ENCODE measurements at regions of chr15 and their contacts with region 1.

Region 1: GRCh38 chr15:88657326-88658069 is 18.7 kb downstream of the ISG20 start:
- DNase-seq: peak in 1 of 2 experiments; percentile 63
- H3K4me3 ChIP-seq: no peak overlapping the region
- H3K4me3 Mint-ChIP-seq: no peak overlapping the region
- H3K27ac Mint-ChIP-seq: no peak overlapping the region
- H3K4me1 ChIP-seq: no peaks in the 10 kb centered on the region
- H3K4me1 Mint-ChIP-seq: no peaks in the 10 kb centered on the region
- H3K27me3 ChIP-seq: no peaks in the 10 kb centered on the region
- H3K27me3 Mint-ChIP-seq: peaks cover 7% of the 10 kb centered on the region
- CTCF ChIP-seq: peak; percentile 81 to 84

Region 2: GRCh38 chr15:88498996-88499395 is 158.5 kb before region 1 on chr15:
- CTCF ChIA-PET with region 1: no interaction called
- POLR2A ChIA-PET with region 1: no interaction called
- intact Hi-C with region 1: no loop called
- DNase-seq: no peak
- H3K4me3 ChIP-seq: no peak overlapping the region
- H3K4me3 Mint-ChIP-seq: no peak overlapping the region
- H3K27ac Mint-ChIP-seq: no peak overlapping the region
- H3K4me1 ChIP-seq: no peaks in the 10 kb centered on the region
- H3K4me1 Mint-ChIP-seq: no peaks in the 10 kb centered on the region
- H3K27me3 ChIP-seq: no peaks in the 10 kb centered on the region
- H3K27me3 Mint-ChIP-seq: no peaks in the 10 kb centered on the region
- CTCF ChIP-seq: no peak

Region 3: DNA sequence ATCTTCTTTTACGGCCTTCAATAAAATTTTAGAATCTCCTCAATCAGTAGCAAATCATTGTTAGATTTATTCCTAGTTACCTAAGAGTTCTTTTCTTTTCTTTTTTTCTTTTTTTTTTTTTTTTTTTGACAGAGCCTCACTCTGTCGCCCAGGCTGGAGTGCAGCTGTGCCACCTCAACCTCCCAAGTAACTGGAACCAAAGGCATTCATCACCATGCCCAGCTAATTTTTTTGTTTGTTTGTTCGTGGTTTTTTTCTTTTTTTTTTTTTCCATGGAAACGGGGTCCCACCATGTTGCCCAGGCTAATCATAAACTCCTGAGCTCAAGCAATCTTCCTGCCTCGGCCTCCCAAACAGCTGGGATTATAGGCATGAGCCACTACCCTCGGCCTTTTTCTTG is 66.7 kb before region 1 on chr15:
- CTCF ChIA-PET with region 1: no interaction called
- POLR2A ChIA-PET with region 1: no interaction called
- intact Hi-C with region 1: loop called (anchors 10 kb)
- DNase-seq: no peak
- H3K4me3 ChIP-seq: no peak overlapping the region
- H3K4me3 Mint-ChIP-seq: no peak overlapping the region
- H3K27ac Mint-ChIP-seq: no peak overlapping the region
- H3K4me1 ChIP-seq: no peaks in the 10 kb centered on the region
- H3K4me1 Mint-ChIP-seq: no peaks in the 10 kb centered on the region
- H3K27me3 ChIP-seq: no peaks in the 10 kb centered on the region
- H3K27me3 Mint-ChIP-seq: peaks cover 6% of the 10 kb centered on the region
- CTCF ChIP-seq: no peak

Region 4: DNA sequence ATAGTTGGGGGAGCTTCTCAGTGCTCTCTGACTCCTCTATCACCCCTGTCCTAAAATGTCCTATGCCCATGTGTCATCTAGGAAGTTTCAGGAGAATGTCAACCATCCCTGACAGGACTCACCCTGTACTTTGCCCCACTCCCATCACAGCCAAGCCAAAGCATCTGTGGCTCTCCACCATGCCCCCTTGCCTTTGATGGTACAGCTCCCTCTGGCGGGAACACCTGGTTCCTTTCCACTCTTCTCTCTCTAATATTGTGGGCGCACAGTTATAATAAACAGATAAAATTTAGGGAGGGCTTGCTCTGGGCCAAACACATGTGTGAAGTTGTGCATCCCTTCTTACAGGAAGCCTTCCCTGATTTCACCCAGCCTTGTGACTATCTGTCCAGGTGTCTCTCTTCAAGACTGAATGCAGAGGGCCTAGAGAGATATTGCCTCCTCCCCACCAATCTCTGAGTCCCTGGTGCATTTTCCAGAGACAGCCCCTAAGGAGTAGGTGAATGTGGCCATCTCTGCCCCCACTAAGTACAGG is 44.1 kb after region 1 on chr15:
- CTCF ChIA-PET with region 1: no interaction called
- POLR2A ChIA-PET with region 1: no interaction called
- intact Hi-C with region 1: loop called (anchors 1 kb)
- DNase-seq: peak in 1 of 2 experiments; percentile 33
- H3K4me3 ChIP-seq: no peak overlapping the region
- H3K4me3 Mint-ChIP-seq: no peak overlapping the region
- H3K27ac Mint-ChIP-seq: no peak overlapping the region
- H3K4me1 ChIP-seq: no peaks in the 10 kb centered on the region
- H3K4me1 Mint-ChIP-seq: no peaks in the 10 kb centered on the region
- H3K27me3 ChIP-seq: no peaks in the 10 kb centered on the region
- H3K27me3 Mint-ChIP-seq: peaks cover 38% of the 10 kb centered on the region
- CTCF ChIP-seq: peak in 1 of 2 experiments; percentile 56

Region 5: GRCh38 chr15:88897456-88898194 is 240.1 kb after region 1 on chr15:
- CTCF ChIA-PET with region 1: no interaction called
- POLR2A ChIA-PET with region 1: no interaction called
- intact Hi-C with region 1: loop called (anchors 1 kb)
- DNase-seq: peak; percentile 71 to 76
- H3K4me3 ChIP-seq: no peak overlapping the region
- H3K4me3 Mint-ChIP-seq: no peak overlapping the region
- H3K27ac Mint-ChIP-seq: peak overlapping the region; percentile 70
- H3K4me1 ChIP-seq: no peaks in the 10 kb centered on the region
- H3K4me1 Mint-ChIP-seq: peaks cover 7% of the 10 kb centered on the region
- H3K27me3 ChIP-seq: no peaks in the 10 kb centered on the region
- H3K27me3 Mint-ChIP-seq: no peaks in the 10 kb centered on the region
- CTCF ChIP-seq: peak; percentile 54 to 69

Measured in Caco-2 (cell line).